ENCODE measurements at regions of chr6 and their contacts with region 1.

Region 1: GRCh38 chr6:98002678-98003473 is 719.9 kb upstream of the MMS22L start:
- DNase-seq: no peak
- H3K4me3 ChIP-seq: no peak overlapping the region
- H3K27ac ChIP-seq: no peak overlapping the region
- H3K4me1 ChIP-seq: no peaks in the 10 kb centered on the region
- H3K27me3 ChIP-seq: no peaks in the 10 kb centered on the region
- CTCF ChIP-seq: no peak

Region 2: DNA sequence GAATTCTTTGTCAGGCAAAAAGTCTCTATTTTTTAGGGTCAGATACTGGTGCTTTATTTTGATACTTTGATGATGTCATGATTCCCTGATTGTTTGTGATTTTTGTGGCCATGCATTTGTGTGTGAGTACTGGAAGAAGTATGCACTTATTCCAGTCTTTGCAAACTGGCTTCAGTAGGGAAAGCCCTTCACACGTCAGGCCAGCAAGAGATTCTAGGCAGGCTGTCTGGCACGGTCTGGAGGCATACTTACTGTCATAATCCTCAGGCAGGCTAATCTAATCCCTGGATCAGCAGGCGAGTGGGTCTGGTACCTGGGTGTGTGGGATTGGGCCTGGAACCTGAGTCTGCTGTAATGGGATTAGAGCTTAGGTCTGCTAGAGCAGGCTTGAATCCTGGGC is 328.1 kb before region 1 on chr6:
- CTCF ChIA-PET with region 1: no interaction called
- POLR2A ChIA-PET with region 1: interaction called, 11 read pairs
- intact Hi-C with region 1: no loop called
- DNase-seq: no peak
- H3K4me3 ChIP-seq: no peak overlapping the region
- H3K27ac ChIP-seq: no peak overlapping the region
- H3K4me1 ChIP-seq: 0 out of 2 replicates have a peak, but pooled peaks cover 8% of the 10 kb centered on the region
- H3K27me3 ChIP-seq: no peaks in the 10 kb centered on the region
- CTCF ChIP-seq: no peak

Region 3: DNA sequence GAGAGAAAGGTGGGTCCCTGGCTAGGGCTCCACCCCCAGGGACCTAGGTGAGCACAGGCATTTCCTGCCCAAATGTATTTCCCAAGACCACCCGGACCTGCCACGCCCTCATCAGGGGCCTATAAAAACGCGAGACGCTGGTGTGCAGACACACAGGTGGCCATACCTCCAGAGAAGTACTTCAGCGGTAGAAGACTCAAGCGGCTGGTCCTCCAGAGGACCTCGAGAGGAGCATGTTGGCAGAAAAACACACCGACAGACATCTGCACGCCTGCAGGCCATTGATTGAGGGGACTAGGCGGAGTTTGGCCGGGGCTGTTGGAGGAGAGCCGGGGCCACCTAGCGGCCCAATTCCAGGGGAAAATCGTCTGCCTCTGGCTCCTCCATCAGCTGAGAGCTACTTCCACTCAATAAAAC is 24.0 kb before region 1 on chr6:
- CTCF ChIA-PET with region 1: no interaction called
- POLR2A ChIA-PET with region 1: interaction called, 14 read pairs
- intact Hi-C with region 1: no loop called
- DNase-seq: no peak
- H3K4me3 ChIP-seq: no peak overlapping the region
- H3K27ac ChIP-seq: no peak overlapping the region
- H3K4me1 ChIP-seq: no peaks in the 10 kb centered on the region
- H3K27me3 ChIP-seq: no peaks in the 10 kb centered on the region
- CTCF ChIP-seq: no peak

Measured in PC-9 (cell line).